Tibial artery (tissue), 4 donors: ENCODE measurements at regions of chr5 and their contacts with region 1.

Region 1: DNA sequence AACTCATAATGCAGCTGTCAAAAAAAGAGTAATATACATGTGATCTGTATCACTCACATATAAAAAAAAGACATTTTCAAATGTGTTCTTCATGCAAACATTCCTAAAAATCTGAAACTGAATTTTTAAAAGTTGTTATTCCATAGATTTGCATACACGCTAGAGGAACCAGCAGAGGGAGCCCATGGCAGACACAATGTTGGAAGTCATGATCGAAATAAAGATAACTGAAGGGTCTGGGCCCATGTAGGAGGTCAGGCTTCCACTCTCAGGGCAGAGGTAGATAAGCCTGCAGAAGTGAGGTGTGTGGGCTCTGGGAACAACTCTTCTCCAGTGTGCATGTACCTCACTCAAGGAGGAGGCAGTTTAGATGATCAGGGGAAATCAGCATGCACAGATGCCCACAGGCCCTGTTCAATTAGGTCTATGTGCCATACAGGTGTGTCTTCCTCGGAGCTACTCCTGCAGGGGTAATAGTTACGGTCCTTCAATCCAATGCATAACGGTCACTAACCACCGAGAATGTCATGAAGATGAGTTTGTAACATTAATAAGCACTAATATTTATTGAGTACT is 208.6 kb downstream of the EPB41L4A start:
- DNase-seq: peak in 1 of 2 donors; percentile 38
- H3K4me3 ChIP-seq: no peak overlapping the region
- H3K27ac ChIP-seq: no peak overlapping the region
- H3K4me1 ChIP-seq: no peaks in the 10 kb centered on the region
- H3K27me3 ChIP-seq: no peaks in the 10 kb centered on the region
- CTCF ChIP-seq: peak; percentile 55 to 62

Region 2: GRCh38 chr5:112419986-112420864 is 209.7 kb after region 1 on chr5:
- intact Hi-C with region 1: loop called (anchors 5 kb)
- DNase-seq: peak; percentile 83 to 87
- H3K4me3 ChIP-seq: peak overlapping the region; percentile 93 to 96
- H3K27ac ChIP-seq: peak overlapping the region; percentile 67 to 77
- H3K4me1 ChIP-seq: peaks cover 0 to 11% (median 0%) of the 10 kb centered on the region in 4 donors
- H3K27me3 ChIP-seq: no peaks in the 10 kb centered on the region
- CTCF ChIP-seq: peak; percentile 88 to 91